ENCODE measurements at regions of chr2 and their contacts with region 1.

Region 1: GRCh38 chr2:216683846-216684507 is 11.4 kb downstream of the IGFBP5 start:
- DNase-seq: peak in 2 of 10 donors; percentile 64 to 65
- H3K4me3 ChIP-seq: no peak overlapping the region
- H3K27ac ChIP-seq: peak overlapping the region in 7 of 59 donors; percentile 0 to 59 (median 37)
- H3K27me3 ChIP-seq: no peaks in the 10 kb centered on the region
- CTCF ChIP-seq: no peak

Region 2: DNA sequence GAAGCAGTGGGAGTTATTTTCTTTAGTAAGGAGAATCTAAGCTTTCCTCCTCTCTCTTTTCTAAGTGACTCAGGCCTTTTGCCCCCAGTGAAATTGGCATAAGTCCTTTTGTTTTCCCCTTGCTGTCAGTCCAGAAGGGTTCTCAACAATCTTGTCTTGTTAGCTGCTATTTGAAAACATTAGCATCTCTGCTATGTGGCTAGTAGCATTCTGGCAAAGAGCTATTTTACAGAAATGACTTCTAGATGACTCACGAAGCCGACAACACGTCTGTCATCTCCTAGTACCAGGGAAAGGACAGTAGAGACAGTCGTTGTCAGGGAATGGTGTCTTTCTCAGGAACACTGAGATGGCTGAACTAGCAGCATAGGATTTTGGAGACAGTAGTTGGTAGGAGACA is 257.0 kb before region 1 on chr2:
- intact Hi-C with region 1: no loop called
- DNase-seq: peak in 1 of 10 donors; percentile 27
- H3K4me3 ChIP-seq: no peak overlapping the region
- H3K27ac ChIP-seq: peak overlapping the region in 49 of 59 donors; percentile 1 to 81 (median 54)
- H3K27me3 ChIP-seq: no peaks in the 10 kb centered on the region
- CTCF ChIP-seq: no peak

Region 3: DNA sequence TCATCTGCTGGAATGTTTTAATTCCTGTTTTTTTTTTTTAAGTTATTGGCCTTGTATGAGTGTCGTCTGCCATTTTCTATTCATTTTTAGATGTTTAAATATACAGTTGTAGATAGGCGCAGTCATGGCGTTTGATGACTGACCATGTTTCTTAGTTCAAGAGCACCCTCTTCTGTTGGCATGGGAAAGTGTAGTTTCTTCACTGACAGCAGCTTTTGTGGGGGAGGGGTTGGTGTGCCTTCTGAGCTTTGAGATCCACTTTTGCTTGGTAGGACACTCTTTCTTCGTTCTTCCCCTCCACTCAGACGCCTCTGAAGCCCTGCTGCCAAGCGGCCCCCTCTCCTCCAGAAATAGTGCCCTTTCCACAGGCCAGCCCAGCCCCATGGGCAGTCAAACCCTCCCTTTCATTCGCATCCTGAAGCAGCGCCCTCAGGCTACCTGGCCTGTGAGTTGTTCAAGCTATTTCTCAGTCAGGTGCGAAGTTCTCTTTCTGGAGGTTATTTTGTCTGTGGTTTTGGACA is 826.9 kb after region 1 on chr2:
- intact Hi-C with region 1: loop called (anchors 5 kb)
- DNase-seq: peak in 8 of 10 donors; percentile 26 to 78 (median 50)
- H3K4me3 ChIP-seq: peak overlapping the region in 11 of 59 donors; percentile 0 to 46 (median 24)
- H3K27ac ChIP-seq: peak overlapping the region in 1 of 59 donors; percentile 11
- H3K27me3 ChIP-seq: no peaks in the 10 kb centered on the region
- CTCF ChIP-seq: peak; percentile 44 to 90 (median 78)